Activated T-helper 2 cell treated with anti-CD3 and anti-CD28 coated beads, Interferon-gamma antibody, Interleukin-2, Interleukin-4, amounts not matched to agents 10 μg/mL and 5 μg/mL and 100 μg/mL, durations not matched to agents 14 hours and 24 hours and 36 hours (primary cell): ENCODE measurements at regions of chrX and their contacts with region 1.

Region 1: DNA sequence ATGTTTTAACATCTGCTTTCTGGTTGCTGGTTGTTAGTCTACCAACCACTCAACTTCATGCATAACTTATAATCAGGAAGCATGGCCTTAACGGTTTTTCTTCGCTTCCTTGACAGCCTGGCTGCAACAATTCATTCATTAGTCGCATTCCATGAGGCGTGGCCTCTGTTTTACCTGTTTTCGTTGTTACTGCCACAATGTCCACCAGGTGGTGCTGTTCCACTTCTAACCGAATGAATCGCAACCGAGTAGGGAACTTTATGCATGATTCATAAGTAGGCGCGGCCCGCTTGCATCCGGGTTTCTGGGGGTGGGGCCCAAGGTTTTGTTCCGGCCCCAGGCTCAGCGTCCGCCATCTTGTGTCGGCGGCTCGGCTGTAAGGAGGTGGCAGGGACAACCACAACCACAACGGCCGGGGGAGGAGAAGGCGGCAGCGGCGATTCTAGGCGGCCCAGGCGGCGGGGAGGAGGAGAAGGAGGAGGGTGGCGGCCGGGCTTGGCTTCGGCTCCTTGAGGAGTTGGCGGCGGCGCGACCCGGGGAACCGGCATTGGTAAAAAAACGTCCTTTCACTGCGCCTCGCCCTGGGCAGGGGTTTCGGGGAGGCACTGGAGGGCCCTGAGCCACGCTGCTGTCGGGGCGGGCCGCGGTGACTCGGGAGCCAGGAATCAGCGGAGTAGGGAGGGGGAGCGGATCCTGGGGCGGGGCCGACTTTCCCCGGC is at the start of gene UBA1:
- DNase-seq: peak; percentile 86
- H3K4me3 Mint-ChIP-seq: peak within 1 kb of the TSS; percentile 97
- H3K27ac Mint-ChIP-seq: peak within 1 kb of the TSS; percentile 96
- H3K4me1 Mint-ChIP-seq: peaks cover 36% of the 10 kb centered on the region
- H3K27me3 Mint-ChIP-seq: no peaks in the 10 kb centered on the region
- total RNA-seq, gene UBA1: 242 and 250 TPM in 2 replicates

Region 2: GRCh38 chrX:47204970-47205369 is 11.3 kb after region 1 on chrX:
- intact Hi-C with region 1: no loop called
- DNase-seq: no peak
- H3K4me3 Mint-ChIP-seq: no peak overlapping the region
- H3K27ac Mint-ChIP-seq: no peak overlapping the region
- H3K4me1 Mint-ChIP-seq: no peaks in the 10 kb centered on the region
- H3K27me3 Mint-ChIP-seq: no peaks in the 10 kb centered on the region

Region 3: GRCh38 chrX:47217642-47218279 is 24.1 kb after region 1 on chrX:
- intact Hi-C with region 1: loop called (anchors 1 kb)
- DNase-seq: peak; percentile 93
- H3K4me3 Mint-ChIP-seq: peak overlapping the region; percentile 91
- H3K27ac Mint-ChIP-seq: peak overlapping the region; percentile 99
- H3K4me1 Mint-ChIP-seq: peaks cover 34% of the 10 kb centered on the region
- H3K27me3 Mint-ChIP-seq: no peaks in the 10 kb centered on the region

Region 4: GRCh38 chrX:47311932-47312774 is 118.5 kb after region 1 on chrX:
- intact Hi-C with region 1: loop called (anchors 10 kb)
- DNase-seq: peak; percentile 10
- H3K4me3 Mint-ChIP-seq: no peak overlapping the region
- H3K27ac Mint-ChIP-seq: no peak overlapping the region
- H3K4me1 Mint-ChIP-seq: no peaks in the 10 kb centered on the region
- H3K27me3 Mint-ChIP-seq: no peaks in the 10 kb centered on the region

Region 5: GRCh38 chrX:47482512-47483309 is 289.1 kb after region 1 on chrX and contains the start of gene ZNF41:
- intact Hi-C with region 1: loop called (anchors 1 kb)
- DNase-seq: peak; percentile 63
- H3K4me3 Mint-ChIP-seq: peak within 1 kb of the TSS; percentile 89
- H3K27ac Mint-ChIP-seq: peak within 1 kb of the TSS; percentile 90
- H3K4me1 Mint-ChIP-seq: peaks cover 25% of the 10 kb centered on the region
- H3K27me3 Mint-ChIP-seq: no peaks in the 10 kb centered on the region
- total RNA-seq, gene ZNF41: 8.7 and 9.7 TPM in 2 replicates